Activated T-helper 1 cell treated with anti-CD3 and anti-CD28 coated beads, Interleukin-12 subunit alpha, Interleukin-12 subunit beta, Interleukin-2, Interleukin-4 antibody, amounts not matched to agents 30 ng/mL and 10 ng/mL and 1 ng/mL, durations not matched to agents 14 hours and 24 hours and 36 hours (primary cell): ENCODE measurements at regions of chr5 and their contacts with region 1.

Region 1: DNA sequence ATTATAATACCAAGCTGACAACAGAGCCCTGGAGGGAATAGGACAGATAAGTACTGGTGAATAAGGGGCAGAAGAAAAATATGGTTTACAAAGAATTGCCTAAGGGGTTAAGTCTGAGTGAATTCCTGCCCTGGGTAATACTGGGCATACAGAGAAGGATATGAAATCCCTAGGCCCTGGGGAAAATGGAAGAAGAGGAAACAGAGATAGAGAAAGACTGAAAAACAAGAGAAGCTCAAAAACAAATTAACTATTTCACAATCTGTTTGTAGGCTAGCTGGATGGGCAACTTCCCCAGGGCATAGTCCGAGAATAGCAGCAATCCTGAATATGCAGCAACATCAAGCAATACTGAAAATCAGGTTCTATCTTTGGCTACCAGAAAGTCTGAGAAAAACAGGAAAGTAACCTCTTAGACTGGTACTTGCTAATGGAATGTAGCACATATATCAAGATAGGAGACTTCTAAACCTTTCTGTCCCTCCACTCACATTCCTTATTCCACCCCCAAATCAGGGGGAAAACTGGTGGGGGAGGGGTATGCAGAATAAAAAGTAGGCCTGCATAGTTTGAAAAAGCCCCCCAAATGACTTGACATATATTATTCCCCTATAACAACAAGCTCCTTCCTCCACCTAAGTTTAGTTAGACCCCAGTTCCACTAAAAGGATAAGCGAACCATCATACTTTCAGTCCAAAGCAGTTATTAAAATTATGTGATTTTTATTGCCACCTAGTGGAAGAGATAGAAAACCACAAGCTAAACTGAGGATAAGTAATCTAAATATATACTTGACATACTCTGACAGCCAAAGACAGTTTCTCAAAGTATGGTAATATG is 20.6 kb downstream of the SLC38A9 start:
- DNase-seq: no peak
- H3K4me3 Mint-ChIP-seq: no peak overlapping the region
- H3K27ac Mint-ChIP-seq: no peak overlapping the region
- H3K4me1 Mint-ChIP-seq: peaks cover 11% of the 10 kb centered on the region
- H3K27me3 Mint-ChIP-seq: no peaks in the 10 kb centered on the region

Region 2: DNA sequence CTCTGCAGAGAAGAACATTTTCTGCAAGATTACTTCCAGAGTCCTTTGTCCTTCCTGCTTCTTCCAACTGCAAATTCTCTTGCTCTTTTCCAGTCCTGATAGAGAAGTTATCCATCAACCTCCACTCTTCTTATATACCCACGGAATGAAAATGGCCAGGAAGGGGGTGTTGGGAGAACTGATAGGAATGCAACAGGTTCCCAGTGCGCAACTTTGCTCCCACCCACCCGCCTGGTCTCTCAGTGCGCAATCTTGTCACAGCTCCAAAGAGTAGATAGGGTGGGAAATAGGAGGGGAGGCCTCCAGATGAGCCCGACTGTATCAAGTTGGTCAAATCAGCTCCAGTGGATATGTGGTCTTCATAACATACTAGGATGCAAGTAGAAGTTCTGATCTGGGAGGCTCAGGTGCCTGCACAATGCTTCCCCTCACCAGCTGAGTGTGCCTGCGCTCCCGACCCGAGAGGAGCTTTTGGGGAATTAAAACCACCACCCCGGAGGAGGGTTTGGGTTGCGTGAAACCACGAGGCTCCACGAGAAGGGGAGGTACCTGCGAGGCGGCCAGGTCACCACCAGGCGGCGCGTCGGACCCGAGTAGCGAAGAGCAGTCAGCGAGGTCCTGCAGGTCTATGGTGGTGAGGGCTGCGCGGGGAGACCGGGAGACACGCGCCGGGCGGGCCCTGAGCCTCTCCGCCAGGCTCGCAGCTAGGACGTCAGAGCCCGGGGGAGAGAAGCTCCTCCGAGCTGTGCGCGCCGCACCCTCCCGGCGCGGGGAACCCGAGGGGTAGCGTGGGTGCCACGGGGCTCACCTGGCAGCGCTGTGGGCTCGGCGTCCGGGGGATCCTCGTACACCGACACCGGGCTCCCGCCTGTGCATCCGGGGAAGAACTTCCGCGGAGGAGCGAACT is 465.2 kb before region 1 on chr5:
- intact Hi-C with region 1: loop called (anchors 5 kb)
- DNase-seq: no peak
- H3K4me3 Mint-ChIP-seq: peak overlapping the region; percentile 61
- H3K27ac Mint-ChIP-seq: peak overlapping the region; percentile 65
- H3K4me1 Mint-ChIP-seq: peaks cover 58% of the 10 kb centered on the region
- H3K27me3 Mint-ChIP-seq: peaks cover 87% of the 10 kb centered on the region

Region 3: DNA sequence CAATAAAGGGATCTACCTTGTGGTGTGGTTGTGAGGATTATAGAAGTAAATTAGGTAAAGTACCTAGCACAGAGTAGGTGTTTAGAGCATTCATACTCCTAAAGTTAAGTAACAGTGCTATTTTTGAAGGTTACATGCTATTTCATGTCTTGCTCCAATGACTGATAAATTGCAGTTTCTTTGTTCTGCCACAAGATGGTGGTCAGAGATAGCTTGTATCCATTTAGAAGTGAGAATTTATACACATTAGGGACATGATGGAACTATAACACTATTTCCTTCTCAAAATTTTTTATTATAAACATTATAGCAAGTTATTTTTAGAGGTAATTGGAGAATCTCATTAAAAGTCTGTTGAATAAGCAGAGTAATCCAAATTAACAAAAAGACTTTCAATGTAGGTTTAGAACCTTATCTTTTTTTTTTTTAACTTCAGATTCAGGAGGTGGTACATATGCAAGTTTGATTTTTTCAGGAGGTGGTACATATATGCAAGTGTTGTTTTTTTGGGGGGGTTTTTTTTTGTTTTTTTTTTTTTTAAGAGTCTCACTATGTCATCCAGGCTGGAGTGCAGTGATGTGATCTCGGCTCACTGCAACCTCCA is 366.6 kb before region 1 on chr5:
- intact Hi-C with region 1: loop called (anchors 1 kb)
- DNase-seq: no peak
- H3K4me3 Mint-ChIP-seq: no peak overlapping the region
- H3K27ac Mint-ChIP-seq: no peak overlapping the region
- H3K4me1 Mint-ChIP-seq: peaks cover 21% of the 10 kb centered on the region
- H3K27me3 Mint-ChIP-seq: no peaks in the 10 kb centered on the region

Region 4: GRCh38 chr5:55344392-55344992 is 347.0 kb before region 1 on chr5:
- intact Hi-C with region 1: loop called (anchors 1 kb)
- DNase-seq: peak; percentile 37
- H3K4me3 Mint-ChIP-seq: no peak overlapping the region
- H3K27ac Mint-ChIP-seq: no peak overlapping the region
- H3K4me1 Mint-ChIP-seq: no peaks in the 10 kb centered on the region
- H3K27me3 Mint-ChIP-seq: no peaks in the 10 kb centered on the region

Region 5: GRCh38 chr5:55407059-55407684 is 284.3 kb before region 1 on chr5:
- intact Hi-C with region 1: loop called (anchors 1 kb)
- DNase-seq: no peak
- H3K4me3 Mint-ChIP-seq: no peak overlapping the region
- H3K27ac Mint-ChIP-seq: no peak overlapping the region
- H3K4me1 Mint-ChIP-seq: peaks cover 6% of the 10 kb centered on the region
- H3K27me3 Mint-ChIP-seq: no peaks in the 10 kb centered on the region

Region 6: GRCh38 chr5:55421074-55421529 is 270.4 kb before region 1 on chr5:
- intact Hi-C with region 1: loop called (anchors 5 kb)
- DNase-seq: no peak
- H3K4me3 Mint-ChIP-seq: no peak overlapping the region
- H3K27ac Mint-ChIP-seq: peak overlapping the region; percentile 3
- H3K4me1 Mint-ChIP-seq: peaks cover 16% of the 10 kb centered on the region
- H3K27me3 Mint-ChIP-seq: no peaks in the 10 kb centered on the region

Region 7: DNA sequence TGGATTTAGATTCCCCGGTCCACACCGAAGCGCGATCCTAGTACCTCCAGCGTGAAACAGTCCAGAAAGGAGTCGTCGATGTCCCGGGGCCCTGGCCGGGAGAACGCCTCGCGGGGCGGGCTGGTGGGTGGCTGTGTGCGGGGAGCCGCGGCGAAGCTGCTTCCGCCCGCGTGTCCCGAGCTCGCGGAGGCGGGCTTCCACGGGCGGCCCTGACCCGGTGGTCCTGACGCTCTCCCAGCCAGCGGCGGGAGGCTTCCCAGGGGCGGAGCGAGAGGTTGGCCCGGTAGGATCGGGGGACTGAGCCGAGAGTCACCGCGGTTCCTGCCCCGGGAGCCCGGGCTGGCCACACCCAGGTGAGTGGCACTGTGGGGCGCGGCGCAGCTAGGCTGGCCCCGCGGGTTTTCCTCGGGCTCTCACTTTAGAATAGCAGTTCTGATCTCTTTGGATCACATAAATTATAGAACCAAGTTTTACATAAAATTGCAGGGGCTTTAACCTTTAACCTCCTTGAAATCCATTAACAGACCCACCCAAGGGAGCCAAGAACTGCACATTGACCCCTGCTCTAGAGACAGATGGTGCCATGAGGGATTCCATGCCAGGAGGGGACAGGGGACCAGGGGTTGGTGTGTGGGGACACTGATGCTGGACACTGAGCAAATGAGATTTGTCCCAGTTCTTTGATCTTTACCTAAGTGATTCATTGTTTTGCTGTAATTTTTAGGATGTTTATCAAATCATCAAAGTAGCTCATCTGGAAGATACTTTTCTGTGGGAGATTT is 130.4 kb after region 1 on chr5:
- intact Hi-C with region 1: no loop called
- DNase-seq: peak; percentile 4
- H3K4me3 Mint-ChIP-seq: peak overlapping the region; percentile 31
- H3K27ac Mint-ChIP-seq: no peak overlapping the region
- H3K4me1 Mint-ChIP-seq: peaks cover 12% of the 10 kb centered on the region
- H3K27me3 Mint-ChIP-seq: peaks cover 47% of the 10 kb centered on the region